ENCODE measurements at regions of chr22 and their contacts with region 1.

Region 1: DNA sequence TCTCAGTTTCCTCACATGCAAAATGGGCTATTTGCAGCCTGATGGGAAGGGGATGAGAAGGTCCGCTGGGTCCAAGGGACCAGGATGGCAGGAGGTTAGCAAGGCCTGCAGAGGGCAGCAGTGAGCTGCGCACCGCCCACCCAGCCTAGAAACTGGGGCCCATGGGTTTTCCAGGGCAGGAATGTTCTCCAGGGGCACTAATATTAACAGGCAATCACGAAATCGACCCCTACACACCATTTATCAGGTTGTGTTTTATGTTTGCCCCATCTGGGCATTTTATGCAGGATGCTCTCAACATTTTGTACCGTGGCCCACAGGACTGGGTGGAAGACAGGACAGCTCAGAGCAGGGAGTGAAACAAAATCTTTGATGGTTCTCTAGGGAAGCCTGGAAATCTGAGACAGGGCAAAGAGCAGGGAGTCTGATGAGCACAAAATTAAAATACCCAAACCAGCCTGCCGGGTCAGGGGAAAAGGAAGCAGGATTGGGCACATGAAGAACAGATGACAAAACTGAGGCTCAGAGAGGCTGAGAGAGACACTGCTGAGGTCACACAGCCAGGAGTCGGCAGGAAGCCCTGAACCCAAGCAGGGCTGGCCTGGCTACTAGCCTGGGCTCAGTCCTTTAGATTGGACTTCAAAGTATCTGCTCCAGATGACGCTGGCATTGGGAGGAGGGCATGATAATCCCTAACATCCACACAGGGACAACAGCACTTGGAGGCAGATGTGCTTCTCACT is 1.6 kb upstream of the BCR start:
- DNase-seq: peak; percentile 54 to 72 (median 63)
- H3K4me3 ChIP-seq: peak overlapping the region in 2 of 7 experiments; percentile 6 to 78
- H3K27ac ChIP-seq: no peak overlapping the region
- H3K4me1 ChIP-seq: peaks cover 8 to 55% (median 41%) of the 10 kb centered on the region in 4 experiments
- H3K27me3 ChIP-seq: no peaks in the 10 kb centered on the region

Region 2: GRCh38 chr22:22948651-22949571 is 229.8 kb before region 1 on chr22:
- CTCF ChIA-PET with region 1: no interaction called
- POLR2A ChIA-PET with region 1: no interaction called
- DNase-seq: no peak
- H3K4me3 ChIP-seq: no peak overlapping the region
- H3K27ac ChIP-seq: no peak overlapping the region
- H3K4me1 ChIP-seq: peaks cover 0 to 22% (median 15%) of the 10 kb centered on the region in 4 experiments
- H3K27me3 ChIP-seq: no peaks in the 10 kb centered on the region

Region 3: DNA sequence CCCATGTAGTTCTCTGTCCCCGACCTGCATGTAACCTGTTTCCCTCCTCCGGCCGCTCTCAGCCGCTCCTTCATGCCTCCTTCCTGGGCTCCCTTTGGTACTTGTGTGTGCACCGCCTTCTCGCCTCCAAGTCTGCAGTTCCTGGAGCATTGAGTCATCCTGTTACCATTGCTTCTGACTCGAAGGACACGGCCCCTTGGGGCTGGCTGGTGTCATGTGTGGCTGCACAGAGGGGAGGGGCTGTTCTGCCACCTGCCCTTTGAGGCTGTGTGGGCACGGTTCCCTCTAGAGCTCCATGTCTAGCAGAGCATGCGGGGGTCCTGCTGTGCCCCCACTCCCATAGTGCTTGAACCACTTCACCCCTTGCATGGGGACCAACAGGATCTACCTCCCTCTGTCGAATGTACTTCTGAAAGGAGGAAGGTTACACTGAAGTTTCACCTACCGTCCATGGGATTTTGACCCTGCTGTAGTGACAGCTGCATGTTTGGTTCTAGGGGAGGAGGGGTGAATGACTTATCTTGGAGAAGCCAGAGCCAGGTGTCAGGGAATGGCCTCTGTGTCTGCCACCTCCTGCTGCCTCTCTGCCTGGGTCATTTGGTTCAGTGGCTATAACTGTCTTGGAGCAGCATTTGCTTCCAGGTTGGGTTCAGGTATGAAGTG is 41.3 kb after region 1 on chr22:
- CTCF ChIA-PET with region 1: interaction called, 18 read pairs
- POLR2A ChIA-PET with region 1: interaction called, 30 read pairs
- DNase-seq: peak in 2 of 3 donors; percentile 65 to 73
- H3K4me3 ChIP-seq: peak overlapping the region in 6 of 7 experiments; percentile 16 to 71 (median 64)
- H3K27ac ChIP-seq: peak overlapping the region; percentile 34 to 91
- H3K4me1 ChIP-seq: peaks cover 51 to 99% (median 97%) of the 10 kb centered on the region in 4 experiments
- H3K27me3 ChIP-seq: no peaks in the 10 kb centered on the region

Region 4: DNA sequence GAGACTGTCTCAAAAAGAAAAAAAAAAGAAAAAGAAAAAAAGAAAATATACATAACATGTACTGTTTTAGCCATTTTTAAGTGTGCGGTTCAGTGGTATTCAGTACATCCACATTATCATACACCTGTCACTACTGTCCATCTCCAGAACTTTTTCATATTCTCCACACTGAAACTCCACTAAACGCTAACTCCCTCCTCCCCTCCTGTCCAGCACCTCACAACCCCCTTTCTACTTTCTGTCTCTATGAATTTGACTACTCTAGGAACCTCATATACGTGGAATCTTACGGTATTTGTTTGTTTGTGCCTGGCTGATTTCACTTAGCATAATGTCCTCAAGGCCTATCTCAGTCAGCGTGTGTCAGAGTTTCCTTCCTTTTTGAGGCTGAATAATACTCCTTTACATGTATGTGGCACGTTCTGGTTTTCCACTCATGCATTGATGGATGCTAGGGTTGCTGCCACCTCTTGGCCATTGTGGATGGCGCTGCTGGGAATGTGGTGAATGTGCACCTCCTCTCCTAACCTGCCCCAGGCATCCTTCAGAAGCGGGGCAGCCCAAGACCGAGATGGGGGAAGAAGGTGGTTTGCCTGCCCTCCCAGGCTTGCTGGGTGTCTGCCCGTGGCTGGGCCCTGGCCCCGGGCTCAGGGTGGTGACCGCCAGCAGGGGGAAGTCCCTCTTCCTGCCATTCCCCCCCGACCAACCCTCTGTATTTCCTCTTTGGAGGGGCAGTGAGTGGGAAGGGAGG is 62.1 kb after region 1 on chr22:
- CTCF ChIA-PET with region 1: interaction called, 16 read pairs
- POLR2A ChIA-PET with region 1: interaction called, 6 read pairs
- DNase-seq: peak; percentile 66 to 82 (median 79)
- H3K4me3 ChIP-seq: peak overlapping the region in 2 of 7 experiments; percentile 8 to 24
- H3K27ac ChIP-seq: peak overlapping the region in 1 of 2 experiments; percentile 62
- H3K4me1 ChIP-seq: peaks cover 6 to 87% (median 43%) of the 10 kb centered on the region in 4 experiments
- H3K27me3 ChIP-seq: no peaks in the 10 kb centered on the region

Region 5: GRCh38 chr22:23274146-23274526 is 95.5 kb after region 1 on chr22:
- CTCF ChIA-PET with region 1: interaction called, 33 read pairs
- POLR2A ChIA-PET with region 1: interaction called, 4 read pairs
- DNase-seq: no peak
- H3K4me3 ChIP-seq: no peak overlapping the region
- H3K27ac ChIP-seq: no peak overlapping the region
- H3K4me1 ChIP-seq: peaks cover 0 to 6% (median 0%) of the 10 kb centered on the region in 4 experiments
- H3K27me3 ChIP-seq: no peaks in the 10 kb centered on the region

Region 6: DNA sequence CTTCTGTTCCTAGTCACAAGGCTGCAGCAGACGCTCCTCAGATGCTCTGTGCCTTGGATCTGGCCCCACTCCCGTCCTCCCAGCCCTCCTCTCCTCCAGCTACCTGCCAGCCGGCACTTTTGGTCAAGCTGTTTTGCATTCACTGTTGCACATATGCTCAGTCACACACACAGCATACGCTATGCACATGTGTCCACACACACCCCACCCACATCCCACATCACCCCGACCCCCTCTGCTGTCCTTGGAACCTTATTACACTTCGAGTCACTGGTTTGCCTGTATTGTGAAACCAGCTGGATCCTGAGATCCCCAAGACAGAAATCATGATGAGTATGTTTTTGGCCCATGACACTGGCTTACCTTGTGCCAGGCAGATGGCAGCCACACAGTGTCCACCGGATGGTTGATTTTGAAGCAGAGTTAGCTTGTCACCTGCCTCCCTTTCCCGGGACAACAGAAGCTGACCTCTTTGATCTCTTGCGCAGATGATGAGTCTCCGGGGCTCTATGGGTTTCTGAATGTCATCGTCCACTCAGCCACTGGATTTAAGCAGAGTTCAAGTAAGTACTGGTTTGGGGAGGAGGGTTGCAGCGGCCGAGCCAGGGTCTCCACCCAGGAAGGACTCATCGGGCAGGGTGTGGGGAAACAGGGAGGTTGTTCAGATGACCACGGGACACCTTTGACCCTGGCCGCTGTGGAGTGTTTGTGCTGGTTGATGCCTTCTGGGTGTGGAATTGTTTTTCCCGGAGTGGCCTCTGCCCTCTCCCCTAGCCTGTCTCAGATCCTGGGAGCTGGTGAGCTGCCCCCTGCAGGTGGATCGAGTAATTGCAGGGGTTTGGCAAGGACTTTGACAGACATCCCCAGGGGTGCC is 111.4 kb after region 1 on chr22:
- CTCF ChIA-PET with region 1: interaction called, 59 read pairs
- POLR2A ChIA-PET with region 1: no interaction called
- DNase-seq: peak; percentile 66 to 81 (median 79)
- H3K4me3 ChIP-seq: no peak overlapping the region
- H3K27ac ChIP-seq: no peak overlapping the region
- H3K4me1 ChIP-seq: no peaks in the 10 kb centered on the region
- H3K27me3 ChIP-seq: no peaks in the 10 kb centered on the region

Measured in common myeloid progenitor, CD34-positive (primary cell).